ENCODE measurements at regions of chr6 and their contacts with region 1.

Region 1: GRCh38 chr6:32195652-32195901 is 3.1 kb upstream of the GPSM3 start:
- DNase-seq: peak; percentile 96 to 100 (median 99)
- ATAC-seq: peak; percentile 82 to 85
- H3K4me3 Mint-ChIP-seq: peak overlapping the region; percentile 92 to 100 (median 97)
- H3K27ac Mint-ChIP-seq: peak overlapping the region; percentile 94 to 100 (median 99)
- H3K4me1 Mint-ChIP-seq: peaks cover 29 to 49% (median 42%) of the 10 kb centered on the region in 4 donors
- H3K27me3 Mint-ChIP-seq: peaks cover 0 to 2% (median 0%) of the 10 kb centered on the region in 5 donors

Region 2: DNA sequence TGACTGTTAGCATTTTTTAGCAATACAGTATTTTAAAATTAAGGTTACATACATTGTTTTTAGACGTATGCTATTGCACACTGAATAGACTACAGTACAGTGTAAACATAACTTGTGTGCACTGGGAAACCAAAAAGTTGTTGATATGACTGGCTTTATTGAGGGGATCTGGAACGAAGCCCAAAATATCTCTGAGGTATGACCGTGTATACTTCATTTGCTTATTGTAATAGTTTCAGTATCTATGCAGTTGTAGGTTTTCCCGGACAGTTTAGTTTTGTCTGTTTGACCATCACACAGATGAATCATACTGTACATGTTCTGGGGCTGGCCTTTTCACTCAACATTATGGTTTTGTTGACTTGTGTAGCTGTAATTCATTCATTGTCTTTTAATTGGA is 286.8 kb before region 1 on chr6:
- POLR2A ChIA-PET with region 1: no interaction called
- DNase-seq: no peak
- ATAC-seq: no peak
- H3K4me3 Mint-ChIP-seq: no peak overlapping the region
- H3K27ac Mint-ChIP-seq: no peak overlapping the region
- H3K4me1 Mint-ChIP-seq: peaks cover 0 to 3% (median 0%) of the 10 kb centered on the region in 4 donors
- H3K27me3 Mint-ChIP-seq: peaks cover 0 to 5% (median 0%) of the 10 kb centered on the region in 5 donors

Region 3: GRCh38 chr6:32127717-32128592 is 67.6 kb before region 1 on chr6 and contains the start of gene ATF6B:
- POLR2A ChIA-PET with region 1: interaction called, 116 read pairs
- DNase-seq: peak; percentile 86 to 99 (median 97)
- ATAC-seq: peak; percentile 95 to 96
- H3K4me3 Mint-ChIP-seq: peak within 1 kb of the TSS; percentile 96 to 100 (median 98)
- H3K27ac Mint-ChIP-seq: peak within 1 kb of the TSS; percentile 90 to 99 (median 97)
- H3K4me1 Mint-ChIP-seq: peaks cover 26 to 62% (median 57%) of the 10 kb centered on the region in 4 donors
- H3K27me3 Mint-ChIP-seq: no peaks in the 10 kb centered on the region
- polyA plus RNA-seq, gene ATF6B: 17.5 to 25.7 (median 21.4) TPM

Region 4: DNA sequence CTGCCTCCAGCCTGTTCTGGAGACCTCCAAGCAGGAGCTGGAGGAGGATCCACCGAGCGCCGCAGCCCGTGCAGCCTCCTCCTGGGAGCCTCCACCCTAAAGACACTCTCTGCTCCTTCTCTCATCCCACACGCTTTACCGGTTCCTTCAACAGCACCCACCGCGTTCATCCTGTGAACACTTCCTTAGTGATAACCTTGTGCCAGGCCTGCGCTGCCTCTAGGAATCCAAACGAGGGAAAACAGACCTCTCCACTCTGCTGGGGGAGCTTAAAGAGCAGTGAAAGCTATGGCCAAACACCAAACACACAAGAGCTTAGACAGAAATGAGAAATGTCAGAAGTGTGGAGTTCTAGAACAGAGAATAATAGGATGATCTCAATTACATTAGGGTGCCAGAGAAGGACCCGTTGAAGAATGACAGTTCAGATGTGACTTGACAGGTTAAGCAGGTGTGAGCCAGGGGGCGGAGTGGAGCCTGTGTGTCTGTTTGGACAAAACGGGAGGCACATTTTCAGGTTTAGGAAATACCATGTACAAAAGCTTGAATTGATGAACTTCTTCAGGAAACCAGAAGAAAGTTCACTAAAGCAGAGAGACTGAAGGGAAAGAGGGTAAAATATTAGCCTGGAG is 363.0 kb after region 1 on chr6:
- POLR2A ChIA-PET with region 1: no interaction called
- DNase-seq: no peak
- ATAC-seq: no peak
- H3K4me3 Mint-ChIP-seq: peak overlapping the region in 1 of 10 donors; percentile 34
- H3K27ac Mint-ChIP-seq: peak overlapping the region in 3 of 10 donors; percentile 2 to 64 (median 60)
- H3K4me1 Mint-ChIP-seq: peaks cover 0 to 5% (median 0%) of the 10 kb centered on the region in 4 donors
- H3K27me3 Mint-ChIP-seq: peaks cover 0 to 33% (median 2%) of the 10 kb centered on the region in 5 donors

Measured in naive thymus-derived CD8-positive, alpha-beta T cell (primary cell).